ENCODE measurements at regions of chr1 and their contacts with region 1.

Region 1: GRCh38 chr1:165481820-165482532 is 37.0 kb upstream of the RXRG start:
- DNase-seq: peak; percentile 60
- H3K4me3 Mint-ChIP-seq: no peak overlapping the region
- H3K27ac Mint-ChIP-seq: peak overlapping the region; percentile 39
- H3K4me1 Mint-ChIP-seq: peaks cover 19% of the 10 kb centered on the region
- H3K27me3 Mint-ChIP-seq: peaks cover 22% of the 10 kb centered on the region

Region 2: DNA sequence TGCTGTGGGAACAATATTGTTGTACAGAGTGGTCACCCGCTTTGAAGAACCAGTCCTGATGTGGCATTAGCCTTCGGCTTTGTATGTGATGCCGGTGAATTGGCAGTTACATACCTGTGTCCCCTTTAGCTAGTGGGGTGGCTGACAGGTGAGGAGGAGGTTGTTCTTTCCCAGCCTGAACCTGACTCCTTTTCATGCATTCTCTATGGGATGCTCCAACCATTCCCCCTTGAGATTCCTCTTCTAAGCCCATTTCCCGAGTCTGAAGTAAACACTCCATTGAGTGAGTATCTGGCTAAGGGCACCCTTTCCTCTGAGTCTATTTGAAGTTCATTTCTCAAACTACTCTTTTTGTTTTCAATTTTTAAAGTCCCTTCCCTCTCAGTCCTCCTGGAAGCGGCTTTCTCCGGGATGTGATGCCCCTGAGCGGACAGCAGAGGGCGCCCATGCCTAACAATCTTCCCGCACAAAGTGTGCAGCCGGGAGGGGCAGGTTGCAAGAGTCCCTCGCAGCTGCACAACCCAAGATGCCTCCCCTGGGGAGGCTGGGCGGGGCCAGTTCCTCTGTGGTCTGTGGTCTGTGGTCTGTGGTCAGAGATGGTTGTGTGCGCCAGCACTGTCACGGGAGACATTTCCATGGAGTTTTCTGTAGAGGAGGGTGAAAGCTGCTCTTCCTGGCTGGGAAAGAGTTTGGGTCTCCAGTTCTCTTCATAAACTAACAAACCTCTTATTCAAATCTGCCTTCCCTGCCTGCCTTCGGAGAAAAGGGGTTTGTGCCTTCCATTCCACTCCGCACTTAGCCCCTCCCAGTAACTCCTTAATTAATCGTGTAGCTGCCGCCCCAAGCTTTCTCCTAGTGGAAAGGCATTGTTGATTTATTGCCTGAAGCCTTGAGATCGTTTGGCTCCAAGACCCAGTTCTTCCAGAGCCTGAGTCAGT is 89.1 kb before region 1 on chr1:
- intact Hi-C with region 1: loop called (anchors 10 kb)
- DNase-seq: peak; percentile 98
- H3K4me3 Mint-ChIP-seq: peak overlapping the region; percentile 74
- H3K27ac Mint-ChIP-seq: peak overlapping the region; percentile 93
- H3K4me1 Mint-ChIP-seq: peaks cover 13% of the 10 kb centered on the region
- H3K27me3 Mint-ChIP-seq: peaks cover 90% of the 10 kb centered on the region

Region 3: GRCh38 chr1:165424454-165425216 is 57.3 kb before region 1 on chr1:
- intact Hi-C with region 1: loop called (anchors 10 kb)
- DNase-seq: peak; percentile 72
- H3K4me3 Mint-ChIP-seq: peak overlapping the region; percentile 73
- H3K27ac Mint-ChIP-seq: peak overlapping the region; percentile 49
- H3K4me1 Mint-ChIP-seq: peaks cover 23% of the 10 kb centered on the region
- H3K27me3 Mint-ChIP-seq: peaks cover 12% of the 10 kb centered on the region

Region 4: GRCh38 chr1:165496501-165496900 is 14.5 kb after region 1 on chr1:
- intact Hi-C with region 1: no loop called
- DNase-seq: no peak
- H3K4me3 Mint-ChIP-seq: no peak overlapping the region
- H3K27ac Mint-ChIP-seq: no peak overlapping the region
- H3K4me1 Mint-ChIP-seq: peaks cover 3% of the 10 kb centered on the region
- H3K27me3 Mint-ChIP-seq: peaks cover 26% of the 10 kb centered on the region